PC-9 (cell line): ENCODE measurements at regions of chr1 and their contacts with region 1.

Region 1: GRCh38 chr1:234875953-234876855 is 252.4 kb downstream of the TOMM20 start:
- DNase-seq: peak; percentile 70 to 98
- H3K4me3 ChIP-seq: peak overlapping the region; percentile 45; the same call in 1 of the 2 replicates
- H3K27ac ChIP-seq: peak overlapping the region; percentile 99
- H3K4me1 ChIP-seq: peaks cover 70% of the 10 kb centered on the region
- H3K27me3 ChIP-seq: no peaks in the 10 kb centered on the region
- CTCF ChIP-seq: no peak

Region 2: GRCh38 chr1:234899041-234899729 is 23.0 kb after region 1 on chr1:
- CTCF ChIA-PET with region 1: no interaction called
- POLR2A ChIA-PET with region 1: no interaction called
- intact Hi-C with region 1: loop called (anchors 1 kb)
- DNase-seq: peak; percentile 82
- H3K4me3 ChIP-seq: no peak overlapping the region
- H3K27ac ChIP-seq: peak overlapping the region; percentile 59
- H3K4me1 ChIP-seq: peaks cover 67% of the 10 kb centered on the region
- H3K27me3 ChIP-seq: no peaks in the 10 kb centered on the region
- CTCF ChIP-seq: no peak